Activated CD4-positive, alpha-beta T cell treated with anti-CD3 and anti-CD28 coated beads for 36 hours (primary cell): ENCODE measurements at regions of chr4 and their contacts with region 1.

Region 1: DNA sequence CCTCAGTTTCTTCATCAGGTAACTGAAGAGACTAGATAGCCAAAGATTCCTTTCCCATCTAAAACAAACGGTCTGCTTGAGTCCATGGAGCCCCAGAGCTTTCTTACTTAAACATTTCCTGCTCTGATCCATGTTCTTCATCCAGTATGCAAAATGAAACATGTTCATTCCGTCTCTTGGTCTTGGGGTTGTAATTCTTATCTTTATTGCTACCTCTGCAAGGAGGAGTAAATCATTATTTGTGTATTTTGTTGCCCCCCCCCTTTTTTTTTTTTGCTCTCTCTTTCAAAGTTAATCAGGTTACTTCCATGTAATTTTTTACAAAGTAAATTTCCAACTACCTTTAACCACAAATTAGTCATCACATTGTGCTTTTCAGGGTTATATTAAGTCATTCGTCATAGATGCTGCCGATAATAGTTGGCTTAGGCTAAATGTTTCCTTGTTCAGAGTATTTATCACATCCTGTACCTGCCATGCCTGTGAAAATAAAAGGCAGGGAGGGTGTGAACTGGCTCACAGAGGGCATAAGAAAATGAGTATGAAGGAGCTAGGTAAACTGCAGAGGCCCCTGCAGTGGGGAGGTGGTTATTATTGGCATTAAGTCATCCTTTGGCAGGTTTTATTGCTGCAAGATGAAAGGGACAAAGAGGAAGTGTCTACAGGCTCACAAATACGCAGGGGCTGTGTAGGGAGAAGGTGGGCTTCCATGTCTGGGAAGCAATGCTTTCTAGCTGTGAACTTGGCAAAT is 76.7 kb upstream of the HS3ST1 start:
- DNase-seq: peak; percentile 52
- ATAC-seq: peak; percentile 98
- H3K4me3 Mint-ChIP-seq: no peak overlapping the region
- H3K27ac Mint-ChIP-seq: no peak overlapping the region
- H3K4me1 Mint-ChIP-seq: peaks cover 25% of the 10 kb centered on the region
- H3K27me3 Mint-ChIP-seq: no peaks in the 10 kb centered on the region

Region 2: DNA sequence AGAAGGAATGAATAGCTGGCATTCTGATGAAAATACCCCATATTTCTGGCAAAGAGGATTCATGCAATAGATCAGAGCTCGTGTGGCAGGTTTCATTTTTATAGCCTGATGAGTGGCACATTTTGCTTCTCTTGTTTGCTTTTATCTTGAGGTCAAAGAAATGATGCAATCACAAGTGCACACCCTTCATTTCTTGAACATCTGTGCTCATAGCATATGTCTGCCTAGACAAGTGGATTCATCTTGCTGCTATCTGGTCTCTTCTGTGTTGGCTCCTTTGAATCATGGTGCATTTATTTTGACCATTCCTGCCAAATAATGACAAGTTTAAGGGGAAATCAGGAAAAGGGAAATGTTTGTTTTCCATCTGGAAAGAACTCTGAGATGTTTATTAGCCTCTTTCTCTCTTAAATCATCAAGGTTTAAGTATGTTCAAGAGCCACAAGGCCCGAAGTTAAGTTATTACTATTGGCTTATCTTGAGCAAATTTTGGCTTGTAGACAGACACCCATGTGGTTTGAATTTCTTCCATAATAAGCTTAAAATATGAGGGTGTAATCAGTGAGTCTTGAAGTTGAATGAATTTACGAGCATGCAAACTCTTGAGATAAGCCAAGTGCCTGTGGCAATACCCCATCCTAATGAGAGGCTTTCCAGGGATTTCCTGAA is 17.4 kb before region 1 on chr4:
- CTCF ChIA-PET with region 1: interaction called, 5 read pairs
- POLR2A ChIA-PET with region 1: no interaction called
- intact Hi-C with region 1: loop called in 1 of 2 experiments (anchors 2 kb)
- DNase-seq: no peak
- ATAC-seq: peak; percentile 33
- H3K4me3 Mint-ChIP-seq: no peak overlapping the region
- H3K27ac Mint-ChIP-seq: peak overlapping the region; percentile 66
- H3K4me1 Mint-ChIP-seq: peaks cover 39% of the 10 kb centered on the region
- H3K27me3 Mint-ChIP-seq: no peaks in the 10 kb centered on the region

Region 3: GRCh38 chr4:11698846-11699590 is 193.6 kb after region 1 on chr4:
- CTCF ChIA-PET with region 1: no interaction called
- POLR2A ChIA-PET with region 1: no interaction called
- intact Hi-C with region 1: no loop called
- DNase-seq: no peak
- ATAC-seq: no peak
- H3K4me3 Mint-ChIP-seq: no peak overlapping the region
- H3K27ac Mint-ChIP-seq: no peak overlapping the region
- H3K4me1 Mint-ChIP-seq: no peaks in the 10 kb centered on the region
- H3K27me3 Mint-ChIP-seq: no peaks in the 10 kb centered on the region